Esophagus muscularis mucosa (tissue), 4 donors: ENCODE measurements at regions of chr19 and their contacts with region 1.

Region 1: DNA sequence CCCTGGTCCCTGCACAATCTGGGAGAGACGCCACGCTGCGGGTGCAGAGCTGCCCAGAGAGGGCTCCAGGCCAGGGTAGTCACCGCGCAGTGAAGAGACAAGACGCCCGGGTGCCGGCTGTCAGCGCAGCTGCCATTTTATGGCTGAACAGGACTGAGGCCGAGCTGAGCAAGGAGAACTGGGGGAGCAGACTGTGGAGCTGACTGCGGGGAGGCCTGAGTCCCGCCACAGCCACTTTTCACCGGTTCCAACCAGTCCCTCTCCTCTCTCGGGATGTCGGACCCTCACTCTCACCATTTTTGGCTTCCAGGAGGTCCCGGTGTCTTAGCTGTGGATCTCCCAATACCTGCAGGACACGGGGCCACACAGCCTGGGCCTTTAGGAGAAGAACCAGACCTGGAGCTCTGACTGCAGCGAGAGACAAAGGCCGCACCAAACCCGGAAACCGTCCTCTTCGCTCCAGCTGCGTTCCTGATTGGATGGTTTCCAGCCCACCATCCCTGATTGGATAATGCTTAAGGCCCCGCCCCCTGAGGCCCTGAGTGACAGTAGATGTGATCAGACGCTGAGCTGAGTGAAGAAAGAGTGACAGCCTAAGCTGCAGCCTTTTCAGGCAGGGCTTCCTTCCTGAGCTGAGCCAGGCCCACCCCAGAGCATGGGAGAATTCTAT is at the start of gene ZNF626:
- DNase-seq: peak; percentile 99
- H3K4me3 ChIP-seq: peak within 1 kb of the TSS; percentile 69 to 87 (median 76)
- H3K27ac ChIP-seq: peak within 1 kb of the TSS; percentile 82 to 91 (median 86)
- H3K4me1 ChIP-seq: peaks cover 18 to 65% (median 49%) of the 10 kb centered on the region in 4 donors
- H3K27me3 ChIP-seq: no peaks in the 10 kb centered on the region
- CTCF ChIP-seq: no peak
- EP300 ChIP-seq: no peak
- POLR2A ChIP-seq: peak; percentile 21
- total RNA-seq, gene ZNF626: 8.4 to 15.8 (median 13.4) TPM

Region 2: DNA sequence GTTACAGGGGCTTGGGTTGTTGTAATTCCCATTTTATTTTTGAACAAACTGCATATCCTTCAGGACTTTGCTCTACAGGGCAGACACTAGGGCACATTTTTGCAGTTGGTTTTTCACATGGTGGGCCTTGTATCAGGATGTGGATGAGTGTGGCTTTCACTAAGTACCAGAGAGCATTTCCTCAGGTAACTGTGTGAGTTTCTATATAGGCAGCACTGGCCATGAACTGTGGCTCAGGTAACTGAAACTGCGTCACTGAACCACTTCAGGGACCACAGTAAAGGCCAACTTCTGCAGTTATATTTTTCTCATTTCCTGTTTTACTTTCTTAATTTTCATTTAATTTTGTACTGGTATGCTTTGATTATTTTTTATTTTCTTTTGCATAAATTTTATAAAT is 327.8 kb before region 1 on chr19:
- intact Hi-C with region 1: no loop called
- DNase-seq: no peak
- H3K4me3 ChIP-seq: no peak overlapping the region
- H3K27ac ChIP-seq: no peak overlapping the region
- H3K4me1 ChIP-seq: peaks cover 0 to 4% (median 0%) of the 10 kb centered on the region in 4 donors
- H3K27me3 ChIP-seq: no peaks in the 10 kb centered on the region
- CTCF ChIP-seq: no peak
- EP300 ChIP-seq: no peak
- POLR2A ChIP-seq: no peak

Region 3: GRCh38 chr19:20423381-20424197 is 237.7 kb before region 1 on chr19:
- intact Hi-C with region 1: loop called (anchors 5 kb)
- DNase-seq: no peak
- H3K4me3 ChIP-seq: peak overlapping the region; percentile 66 to 75 (median 70)
- H3K27ac ChIP-seq: peak overlapping the region; percentile 85 to 90 (median 88)
- H3K4me1 ChIP-seq: peaks cover 0 to 10% (median 6%) of the 10 kb centered on the region in 4 donors
- H3K27me3 ChIP-seq: no peaks in the 10 kb centered on the region
- CTCF ChIP-seq: no peak
- EP300 ChIP-seq: no peak
- POLR2A ChIP-seq: no peak

Region 4: DNA sequence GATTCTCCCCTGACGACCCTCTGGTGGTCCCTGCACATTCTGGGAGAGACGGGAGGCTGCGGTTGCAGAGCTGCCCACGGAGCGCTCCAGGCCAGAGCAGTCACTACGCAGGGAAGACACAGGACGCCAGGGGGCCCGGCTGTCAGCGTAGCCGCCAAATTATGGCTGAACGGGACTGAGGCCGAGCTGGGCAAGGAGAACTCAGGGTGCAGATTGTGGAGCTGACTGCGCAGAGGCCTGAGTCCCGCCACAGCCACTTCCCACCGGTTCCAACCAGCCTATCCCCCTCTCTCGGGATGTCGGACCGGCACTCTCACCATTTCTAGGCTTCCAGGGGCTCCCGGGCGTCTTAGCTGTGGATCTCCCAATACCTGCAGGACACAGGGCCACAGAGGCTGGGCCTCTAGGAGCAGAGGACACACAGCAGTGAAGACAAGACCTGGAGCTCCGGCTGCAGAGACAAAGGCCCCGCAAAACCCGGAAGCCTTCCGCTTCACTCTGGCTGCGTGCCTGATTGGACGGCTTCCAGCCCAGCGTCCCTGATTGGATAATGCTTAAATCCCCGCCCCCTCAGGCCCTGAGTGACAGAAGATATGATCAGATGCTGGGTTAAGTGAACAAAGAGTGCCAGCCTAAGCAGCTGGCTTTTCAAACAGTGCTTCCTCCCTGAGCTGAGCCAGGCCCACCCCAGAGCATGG is 95.8 kb before region 1 on chr19 and contains the start of gene ZNF737:
- intact Hi-C with region 1: loop called (anchors 1 kb)
- DNase-seq: peak; percentile 98
- H3K4me3 ChIP-seq: peak within 1 kb of the TSS; percentile 76 to 80 (median 77)
- H3K27ac ChIP-seq: peak within 1 kb of the TSS; percentile 87 to 90 (median 88)
- H3K4me1 ChIP-seq: peaks cover 10 to 46% (median 41%) of the 10 kb centered on the region in 4 donors
- H3K27me3 ChIP-seq: no peaks in the 10 kb centered on the region
- CTCF ChIP-seq: peak; percentile 12 to 53 (median 32)
- EP300 ChIP-seq: no peak
- POLR2A ChIP-seq: peak; percentile 27
- total RNA-seq, gene ZNF737: 8.0 to 11.0 (median 10.0) TPM

Region 5: DNA sequence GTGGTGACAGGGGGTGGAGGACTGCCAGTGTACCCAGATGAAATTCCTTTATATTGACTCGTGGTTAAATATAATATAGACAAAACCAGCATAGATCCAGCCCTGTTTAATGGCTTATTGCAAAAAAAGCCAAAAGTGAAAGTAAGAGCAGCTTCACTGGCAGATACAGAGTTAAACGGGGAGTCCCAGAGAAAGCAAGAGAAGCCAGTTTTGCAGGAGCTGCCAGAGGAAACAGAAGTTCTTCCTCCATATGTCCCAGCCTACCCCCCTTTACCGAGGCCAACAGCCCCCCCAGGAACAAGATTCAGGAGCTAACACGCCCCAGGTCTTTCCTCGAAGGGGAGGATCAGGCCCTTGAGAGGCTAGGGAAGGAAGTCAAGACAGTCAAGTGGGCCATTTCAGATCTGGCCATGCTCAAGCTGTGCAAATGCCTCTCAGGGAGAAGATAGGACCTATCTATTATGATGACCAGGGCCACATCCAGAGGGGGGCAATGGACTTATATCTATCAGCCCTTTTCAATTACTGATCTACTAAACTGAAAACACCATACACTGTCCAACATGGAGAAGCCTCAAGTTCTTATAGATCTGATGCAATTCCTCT is 48.5 kb before region 1 on chr19:
- intact Hi-C with region 1: loop called (anchors 5 kb)
- DNase-seq: no peak
- H3K4me3 ChIP-seq: peak overlapping the region; percentile 28 to 48 (median 38)
- H3K27ac ChIP-seq: peak overlapping the region in 3 of 4 donors; percentile 39 to 69 (median 62)
- H3K4me1 ChIP-seq: peaks cover 0 to 33% (median 5%) of the 10 kb centered on the region in 4 donors
- H3K27me3 ChIP-seq: no peaks in the 10 kb centered on the region
- CTCF ChIP-seq: no peak
- EP300 ChIP-seq: no peak
- POLR2A ChIP-seq: no peak

Region 6: DNA sequence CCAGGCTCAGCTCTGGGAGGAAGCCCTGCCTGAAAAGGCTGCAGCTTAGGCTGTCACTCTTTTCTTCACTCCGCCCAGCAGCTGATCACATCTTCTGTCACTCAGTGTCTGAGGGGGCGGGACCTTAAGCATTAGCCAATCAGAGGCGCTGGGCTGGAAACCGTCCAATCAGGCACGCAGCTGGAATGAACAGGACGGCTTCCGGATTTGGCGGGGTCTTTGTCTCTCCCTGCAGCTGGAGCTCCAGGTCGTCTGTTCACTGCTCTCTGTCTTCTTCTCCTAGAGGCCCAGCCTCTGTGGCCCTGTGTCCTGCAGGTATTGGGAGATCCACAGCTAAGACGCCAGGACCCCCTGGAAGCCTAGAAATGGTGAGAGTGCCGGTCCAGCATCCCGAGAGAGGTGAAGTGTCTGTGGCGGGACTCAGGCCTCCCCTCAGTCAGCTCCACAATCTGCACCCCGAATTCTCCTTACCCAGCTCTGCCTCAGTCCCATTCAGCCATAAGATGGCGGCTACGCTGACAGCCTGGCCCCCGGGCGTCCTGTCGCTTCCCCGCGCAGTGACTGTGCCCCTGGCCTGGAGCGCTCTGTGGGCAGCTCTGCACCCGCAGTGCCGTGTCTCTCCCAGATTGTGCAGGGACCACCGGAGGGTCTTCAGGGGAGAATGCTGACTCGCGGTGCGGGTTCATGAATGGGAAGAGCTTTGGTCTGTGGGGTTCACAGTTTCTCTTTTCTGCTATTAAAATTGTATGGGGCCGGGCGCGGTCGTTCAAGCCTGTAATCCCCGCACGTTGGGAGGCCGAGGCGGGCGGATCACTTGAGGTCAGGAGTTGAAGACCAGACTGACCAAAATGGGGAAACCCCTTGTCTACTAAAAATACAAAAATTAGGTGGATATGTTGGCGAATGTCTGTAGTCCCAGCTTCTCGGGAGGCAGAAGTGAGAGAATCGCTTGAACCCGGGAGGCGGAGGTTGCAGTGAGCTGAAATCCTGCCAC is 115.1 kb after region 1 on chr19 and contains the start of gene ZNF66:
- intact Hi-C with region 1: loop called (anchors 10 kb)
- DNase-seq: peak; percentile 99
- H3K4me3 ChIP-seq: peak within 1 kb of the TSS; percentile 67 to 77 (median 72)
- H3K27ac ChIP-seq: peak within 1 kb of the TSS; percentile 51 to 75 (median 64)
- H3K4me1 ChIP-seq: peaks cover 4 to 10% (median 6%) of the 10 kb centered on the region in 4 donors
- H3K27me3 ChIP-seq: no peaks in the 10 kb centered on the region
- CTCF ChIP-seq: no peak
- EP300 ChIP-seq: no peak
- POLR2A ChIP-seq: no peak
- total RNA-seq, gene ZNF66: 1.3 to 3.7 (median 2.1) TPM

Region 7: DNA sequence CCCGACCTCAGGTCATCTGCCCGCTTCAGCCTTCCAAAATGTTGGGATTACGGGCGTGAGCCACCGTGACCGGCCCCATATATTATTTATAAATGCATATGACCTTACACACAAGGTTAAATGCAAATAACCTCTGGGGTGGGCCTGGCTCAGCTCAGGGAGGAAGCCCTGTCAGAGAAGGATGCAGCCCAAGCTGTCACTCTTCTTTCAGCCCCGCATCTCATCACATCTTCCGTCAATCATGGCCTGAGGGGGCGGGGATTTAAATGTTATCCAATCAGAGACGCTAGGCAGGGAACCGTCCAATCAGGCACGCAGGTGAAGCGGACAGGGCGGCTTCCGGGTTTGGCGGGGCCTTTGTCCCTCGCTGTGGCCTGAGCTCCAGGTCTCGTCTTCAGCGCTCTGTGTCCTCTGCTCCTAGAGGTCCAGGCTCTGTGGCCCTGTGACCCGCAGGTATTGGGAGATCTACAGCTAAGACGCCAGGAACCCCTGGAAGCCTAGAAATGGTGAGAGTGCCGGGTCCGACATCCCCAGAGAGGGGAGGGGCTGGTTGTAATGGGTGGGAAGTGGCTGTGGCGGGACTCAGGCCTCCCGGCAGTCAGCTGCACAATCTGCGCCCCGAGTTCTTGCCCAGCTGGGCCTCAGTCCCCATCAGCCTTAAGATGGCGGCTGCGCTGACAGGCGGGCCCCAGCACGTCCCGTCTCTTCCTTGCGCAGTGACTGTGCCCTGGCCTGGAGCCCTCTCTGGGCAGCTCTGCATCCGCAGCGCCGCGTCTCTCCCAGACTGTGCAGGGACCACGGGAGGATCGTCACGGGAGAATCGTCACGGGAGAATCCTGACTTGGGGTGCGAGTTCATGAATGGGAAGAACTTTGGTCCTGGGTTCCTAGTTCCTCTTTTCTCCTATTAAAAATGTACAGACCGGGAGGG is 359.3 kb after region 1 on chr19 and contains the start of gene ZNF430:
- intact Hi-C with region 1: loop called (anchors 10 kb)
- DNase-seq: peak; percentile 99
- H3K4me3 ChIP-seq: peak within 1 kb of the TSS; percentile 72 to 84 (median 80)
- H3K27ac ChIP-seq: peak within 1 kb of the TSS; percentile 87 to 92 (median 88)
- H3K4me1 ChIP-seq: peaks cover 8 to 20% (median 15%) of the 10 kb centered on the region in 4 donors
- H3K27me3 ChIP-seq: no peaks in the 10 kb centered on the region
- CTCF ChIP-seq: no peak
- EP300 ChIP-seq: no peak
- POLR2A ChIP-seq: no peak
- total RNA-seq, gene ZNF430: 4.5 to 11.2 (median 6.3) TPM